ENCODE measurements at regions of chr6 and their contacts with region 1.

Region 1: GRCh38 chr6:160015778-160016684 is 47.1 kb downstream of the IGF2R start:
- DNase-seq: peak; percentile 76
- H3K4me3 Mint-ChIP-seq: peak overlapping the region; percentile 36
- H3K27ac Mint-ChIP-seq: peak overlapping the region; percentile 80
- H3K4me1 Mint-ChIP-seq: peaks cover 66% of the 10 kb centered on the region
- H3K27me3 Mint-ChIP-seq: no peaks in the 10 kb centered on the region

Region 2: GRCh38 chr6:159739341-159739740 is 276.7 kb before region 1 on chr6:
- CTCF ChIA-PET with region 1: no interaction called
- POLR2A ChIA-PET with region 1: no interaction called
- intact Hi-C with region 1: no loop called
- DNase-seq: no peak
- H3K4me3 Mint-ChIP-seq: no peak overlapping the region
- H3K27ac Mint-ChIP-seq: no peak overlapping the region
- H3K4me1 Mint-ChIP-seq: peaks cover 23% of the 10 kb centered on the region
- H3K27me3 Mint-ChIP-seq: no peaks in the 10 kb centered on the region

Region 3: GRCh38 chr6:159968440-159969203 is 47.4 kb before region 1 on chr6 and contains the start of gene IGF2R:
- CTCF ChIA-PET with region 1: no interaction called
- POLR2A ChIA-PET with region 1: interaction called, 5 read pairs
- intact Hi-C with region 1: loop called (anchors 1 kb)
- DNase-seq: peak; percentile 95
- H3K4me3 Mint-ChIP-seq: peak within 1 kb of the TSS; percentile 92
- H3K27ac Mint-ChIP-seq: peak within 1 kb of the TSS; percentile 92
- H3K4me1 Mint-ChIP-seq: peaks cover 40% of the 10 kb centered on the region
- H3K27me3 Mint-ChIP-seq: no peaks in the 10 kb centered on the region
- total RNA-seq, gene IGF2R: 73.5 to 75.5 TPM

Region 4: GRCh38 chr6:160462551-160463109 is 446.6 kb after region 1 on chr6:
- CTCF ChIA-PET with region 1: no interaction called
- POLR2A ChIA-PET with region 1: no interaction called
- intact Hi-C with region 1: loop called (anchors 5 kb)
- DNase-seq: peak; percentile 64
- H3K4me3 Mint-ChIP-seq: peak overlapping the region; percentile 42
- H3K27ac Mint-ChIP-seq: peak overlapping the region; percentile 68
- H3K4me1 Mint-ChIP-seq: peaks cover 72% of the 10 kb centered on the region
- H3K27me3 Mint-ChIP-seq: peaks cover 14% of the 10 kb centered on the region